Posterior vena cava (tissue), 2 donors: ENCODE measurements at regions of chr6 and their contacts with region 1.

Region 1: GRCh38 chr6:259901-260508 is 32.3 kb upstream of the DUSP22 start:
- DNase-seq: no peak

Region 2: DNA sequence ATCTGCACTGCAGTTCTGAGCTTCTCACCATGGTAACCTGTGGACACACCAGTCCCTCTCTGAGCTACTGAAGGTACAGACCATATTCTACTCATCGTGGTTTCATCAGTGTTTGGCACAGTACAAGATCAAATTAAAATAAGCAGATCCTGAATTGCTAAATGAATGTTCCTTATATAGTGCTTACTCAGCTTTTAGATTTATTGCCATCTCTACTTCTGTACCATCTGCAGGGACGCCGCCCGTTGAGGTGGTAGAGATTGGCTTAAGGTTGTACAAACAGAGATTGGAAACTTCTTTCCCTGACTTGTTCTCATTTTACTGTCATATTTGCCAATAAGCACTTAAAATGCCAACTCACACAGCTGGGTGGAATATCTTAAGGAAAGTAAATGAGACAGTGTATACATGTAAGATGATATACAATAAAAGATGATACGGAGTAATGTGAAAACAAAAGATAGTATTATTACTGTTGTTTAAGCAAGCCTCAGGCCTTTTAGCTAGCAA is 828.5 kb after region 1 on chr6:
- intact Hi-C with region 1: loop called in 1 of 2 experiments (anchors 5 kb)
- DNase-seq: no peak